BJ (cell line): ENCODE measurements at regions of chr2 and their contacts with region 1.

Region 1: GRCh38 chr2:11446733-11447248 is 19.2 kb downstream of the E2F6 start:
- DNase-seq: peak; percentile 2
- H3K4me3 ChIP-seq: no peak overlapping the region
- H3K27me3 ChIP-seq: no peaks in the 10 kb centered on the region
- CTCF ChIP-seq: peak; percentile 80

Region 2: GRCh38 chr2:11112870-11113452 is 333.8 kb before region 1 on chr2:
- CTCF ChIA-PET with region 1: no interaction called
- POLR2A ChIA-PET with region 1: no interaction called
- DNase-seq: no peak
- H3K4me3 ChIP-seq: no peak overlapping the region
- H3K27me3 ChIP-seq: peaks cover 2% of the 10 kb centered on the region; the same call in 1 of the 2 replicates
- CTCF ChIP-seq: no peak

Region 3: GRCh38 chr2:11457935-11458334 is 11.1 kb after region 1 on chr2:
- CTCF ChIA-PET with region 1: interaction called, 10 read pairs
- POLR2A ChIA-PET with region 1: no interaction called
- DNase-seq: no peak
- H3K4me3 ChIP-seq: no peak overlapping the region
- H3K27me3 ChIP-seq: no peaks in the 10 kb centered on the region
- CTCF ChIP-seq: no peak

Region 4: DNA sequence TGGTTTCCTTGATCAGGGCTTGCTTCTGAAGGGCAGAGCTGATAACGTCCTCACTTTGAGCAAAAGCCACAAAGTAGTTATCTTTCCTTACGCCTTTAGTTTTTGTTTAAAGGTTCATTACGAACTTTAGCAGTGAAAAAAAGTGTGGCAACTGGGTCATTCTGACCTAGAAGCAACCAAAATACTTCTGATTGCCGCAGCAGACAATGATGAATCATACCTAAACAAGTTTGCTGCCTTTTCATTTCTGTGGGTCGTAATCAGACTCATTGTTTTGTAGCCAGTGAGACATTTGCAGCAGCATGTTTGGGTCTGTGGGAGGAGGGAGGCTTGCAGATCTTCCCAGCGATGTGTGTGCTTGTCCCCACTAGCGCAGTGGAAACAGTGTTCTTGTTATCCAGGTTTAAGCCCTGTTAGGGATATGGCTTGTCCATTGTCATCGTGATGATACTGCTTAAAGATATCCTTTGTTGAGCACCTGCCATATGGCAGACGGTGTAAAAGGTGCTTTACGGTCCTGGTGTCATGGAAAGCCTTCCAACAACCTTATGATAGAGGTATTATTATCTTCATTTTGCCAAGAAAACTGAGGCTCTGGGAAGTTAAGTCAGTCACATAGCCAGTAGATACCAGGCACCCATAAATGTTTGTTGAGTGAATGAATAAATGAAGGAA is 85.7 kb after region 1 on chr2:
- CTCF ChIA-PET with region 1: no interaction called
- POLR2A ChIA-PET with region 1: no interaction called
- DNase-seq: no peak
- H3K4me3 ChIP-seq: no peak overlapping the region
- H3K27me3 ChIP-seq: peaks cover 5% of the 10 kb centered on the region
- CTCF ChIP-seq: no peak